IMR-90 (cell line): ENCODE measurements at regions of chr1 and their contacts with region 1.

Region 1: GRCh38 chr1:74161497-74161896 is 36.5 kb downstream of the LRRIQ3 start:
- DNase-seq: peak; percentile 87
- ATAC-seq: peak; percentile 97
- H3K4me3 ChIP-seq: no peak overlapping the region; the same call in 1 of the 2 replicates
- H3K27ac ChIP-seq: no peak overlapping the region
- H3K4me1 ChIP-seq: peaks cover 12% of the 10 kb centered on the region
- H3K27me3 ChIP-seq: no peaks in the 10 kb centered on the region
- CTCF ChIP-seq: no peak
- POLR2A ChIP-seq: no peak
- RAD21 ChIP-seq: no peak

Region 2: GRCh38 chr1:74197657-74198552 is 36.4 kb after region 1 on chr1 and contains the starts of genes FPGT and LRRIQ3:
- CTCF ChIA-PET with region 1: no interaction called
- POLR2A ChIA-PET with region 1: no interaction called
- dilution Hi-C with region 1: no loop called
- in situ Hi-C with region 1: no loop called
- intact Hi-C with region 1: loop called (anchors 2 kb)
- DNase-seq: peak; percentile 94
- ATAC-seq: peak; percentile 98
- H3K4me3 ChIP-seq: peak within 1 kb of the TSS; percentile 64
- H3K27ac ChIP-seq: peak within 1 kb of the TSS; percentile 84
- H3K4me1 ChIP-seq: no peaks in the 10 kb centered on the region
- H3K27me3 ChIP-seq: no peaks in the 10 kb centered on the region
- CTCF ChIP-seq: no peak
- POLR2A ChIP-seq: peak; percentile 84
- RAD21 ChIP-seq: no peak
- total RNA-seq, gene FPGT: 13.3 and 23.6 TPM in 2 replicates
- total RNA-seq, gene LRRIQ3: 1.8 and 3.1 TPM in 2 replicates

Region 3: DNA sequence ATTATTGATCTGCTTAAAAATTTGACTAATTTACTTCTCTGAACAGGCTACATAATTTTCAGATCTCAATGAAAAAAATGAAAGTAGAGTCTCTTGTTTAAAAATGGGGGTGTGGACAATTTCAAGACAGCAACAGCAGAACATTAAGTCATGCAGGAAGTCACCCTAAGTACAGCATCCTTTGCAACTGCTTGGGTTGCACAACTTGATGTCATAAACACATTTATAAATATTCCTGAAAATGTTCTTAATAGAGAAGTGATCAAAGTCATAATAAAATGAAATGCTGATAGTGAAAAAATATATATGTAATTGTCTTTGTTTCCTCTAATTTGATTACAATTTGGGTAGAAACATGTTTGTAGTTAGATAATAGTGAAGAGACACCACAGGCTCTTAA is 152.9 kb after region 1 on chr1:
- CTCF ChIA-PET with region 1: no interaction called
- POLR2A ChIA-PET with region 1: no interaction called
- dilution Hi-C with region 1: no loop called
- in situ Hi-C with region 1: no loop called
- intact Hi-C with region 1: no loop called
- DNase-seq: no peak
- ATAC-seq: no peak
- H3K4me3 ChIP-seq: no peak overlapping the region
- H3K27ac ChIP-seq: no peak overlapping the region
- H3K4me1 ChIP-seq: no peaks in the 10 kb centered on the region
- H3K27me3 ChIP-seq: no peaks in the 10 kb centered on the region
- CTCF ChIP-seq: no peak
- POLR2A ChIP-seq: no peak
- RAD21 ChIP-seq: no peak